ENCODE measurements at regions of chr10 and their contacts with region 1.

Region 1: DNA sequence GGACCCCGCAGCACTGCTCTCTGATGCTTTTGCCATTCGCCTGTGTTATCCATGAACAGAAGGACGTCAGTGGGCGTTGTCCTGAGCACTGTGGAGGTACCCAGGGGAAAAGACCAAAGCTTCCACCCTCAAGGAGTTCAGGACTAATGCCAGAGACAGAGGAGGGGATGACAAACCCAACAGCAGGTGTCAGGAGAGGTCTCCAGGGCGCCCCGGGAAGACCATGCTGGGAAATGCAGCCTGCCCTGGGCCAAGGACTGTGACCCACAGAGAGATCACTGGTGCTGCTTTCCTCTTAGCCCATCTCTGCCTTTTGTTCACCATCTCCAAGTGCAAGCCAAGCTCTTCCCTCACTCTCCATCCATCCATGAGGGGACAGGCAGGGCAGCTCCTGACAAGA is 166.8 kb upstream of the PFKP start:
- DNase-seq: no peak
- H3K4me3 ChIP-seq: no peak overlapping the region
- H3K27ac ChIP-seq: no peak overlapping the region
- H3K4me1 ChIP-seq: no peaks in the 10 kb centered on the region
- H3K27me3 ChIP-seq: no peaks in the 10 kb centered on the region
- CTCF ChIP-seq: no peak
- EP300 ChIP-seq: no peak
- POLR2A ChIP-seq: no peak

Region 2: DNA sequence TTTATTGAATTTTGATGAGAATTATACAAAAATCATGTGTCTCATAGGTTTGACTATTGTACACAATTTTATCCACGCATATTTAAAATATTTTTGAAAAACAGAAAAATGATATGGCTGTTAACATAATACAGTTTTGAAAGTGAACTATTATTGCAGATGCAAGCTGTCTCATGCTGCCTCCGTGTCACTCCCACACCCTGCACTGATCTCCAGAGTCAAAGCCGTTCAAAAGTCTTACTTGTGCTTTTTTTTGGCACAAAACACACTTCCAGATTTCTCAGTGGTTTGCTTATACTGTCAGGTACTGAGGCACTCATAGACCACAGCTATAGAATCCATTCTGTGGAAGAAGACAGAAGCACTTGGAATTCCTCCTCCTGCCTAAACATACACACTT is 920.1 kb before region 1 on chr10:
- intact Hi-C with region 1: loop called in 1 of 4 experiments (anchors 5 kb)
- DNase-seq: no peak
- H3K4me3 ChIP-seq: no peak overlapping the region
- H3K27ac ChIP-seq: no peak overlapping the region
- H3K4me1 ChIP-seq: no peaks in the 10 kb centered on the region
- H3K27me3 ChIP-seq: no peaks in the 10 kb centered on the region
- CTCF ChIP-seq: no peak
- EP300 ChIP-seq: no peak
- POLR2A ChIP-seq: no peak

Measured in ovary (tissue), 10 donors.